Spleen (tissue), 13 donors: ENCODE measurements at regions of chr7 and their contacts with region 1.

Region 1: DNA sequence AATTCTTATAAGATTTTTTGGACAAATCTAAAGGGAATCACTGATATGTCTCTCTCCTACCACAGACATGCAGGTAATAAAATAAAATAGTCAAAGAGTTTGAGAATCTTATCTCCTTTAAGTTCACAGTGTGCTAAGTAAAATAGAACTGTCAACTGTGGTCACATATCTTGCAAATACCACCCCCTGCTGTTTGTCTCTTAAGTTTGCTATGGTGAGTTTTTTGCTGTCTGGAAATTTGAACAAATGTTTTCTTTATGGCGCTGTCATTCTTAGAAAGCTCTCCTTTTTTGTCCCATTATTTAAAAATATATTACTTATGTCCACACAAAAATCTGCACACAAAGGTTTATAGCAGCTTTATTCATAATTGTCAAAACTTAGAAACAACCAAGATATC is 19.6 kb downstream of the GIMAP5 start:
- DNase-seq: no peak
- H3K4me3 ChIP-seq: no peak overlapping the region
- H3K27ac ChIP-seq: peak overlapping the region in 4 of 8 donors; percentile 74 to 82 (median 78)
- H3K4me1 ChIP-seq: peaks cover 13 to 56% (median 32%) of the 10 kb centered on the region in 6 donors
- H3K27me3 ChIP-seq: no peaks in the 10 kb centered on the region
- CTCF ChIP-seq: peak; percentile 26 to 70 (median 59)
- POLR2A ChIP-seq: no peak

Region 2: DNA sequence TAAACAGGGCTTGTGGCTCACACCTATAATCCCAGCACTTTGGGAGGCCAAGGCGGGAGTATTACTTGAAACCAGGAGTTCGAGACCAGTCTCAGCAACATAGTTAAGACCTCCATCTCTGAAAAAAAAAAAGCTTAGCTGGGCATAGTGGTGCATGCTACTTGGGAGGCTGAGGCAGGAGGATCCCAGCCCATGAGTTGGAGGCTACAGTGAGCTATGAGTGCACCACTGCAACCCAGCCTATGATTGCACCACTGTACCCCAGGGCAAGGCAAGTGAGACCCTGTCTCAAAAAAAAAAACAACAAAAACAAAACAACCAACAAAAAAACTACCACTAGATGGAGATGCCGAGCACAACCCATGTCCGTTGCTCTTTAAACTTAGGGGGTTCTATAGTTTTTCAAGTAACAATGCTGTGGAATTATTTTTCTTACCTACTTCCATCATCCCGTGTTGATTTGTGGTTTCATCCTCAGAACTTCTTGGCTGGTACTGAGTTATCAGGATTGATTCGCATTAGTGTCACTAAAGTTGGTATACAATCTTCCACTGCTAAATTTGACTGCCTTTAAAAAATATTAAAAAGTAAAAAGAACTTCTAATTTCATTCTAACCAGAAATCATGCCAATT is 400.5 kb before region 1 on chr7:
- intact Hi-C with region 1: no loop called
- DNase-seq: no peak
- H3K4me3 ChIP-seq: no peak overlapping the region
- H3K27ac ChIP-seq: peak overlapping the region in 3 of 8 donors; percentile 43 to 51 (median 45)
- H3K4me1 ChIP-seq: peaks cover 0 to 39% (median 22%) of the 10 kb centered on the region in 6 donors
- H3K27me3 ChIP-seq: no peaks in the 10 kb centered on the region
- CTCF ChIP-seq: peak in 9 of 11 experiments; percentile 18 to 75 (median 59)
- POLR2A ChIP-seq: no peak

Region 3: DNA sequence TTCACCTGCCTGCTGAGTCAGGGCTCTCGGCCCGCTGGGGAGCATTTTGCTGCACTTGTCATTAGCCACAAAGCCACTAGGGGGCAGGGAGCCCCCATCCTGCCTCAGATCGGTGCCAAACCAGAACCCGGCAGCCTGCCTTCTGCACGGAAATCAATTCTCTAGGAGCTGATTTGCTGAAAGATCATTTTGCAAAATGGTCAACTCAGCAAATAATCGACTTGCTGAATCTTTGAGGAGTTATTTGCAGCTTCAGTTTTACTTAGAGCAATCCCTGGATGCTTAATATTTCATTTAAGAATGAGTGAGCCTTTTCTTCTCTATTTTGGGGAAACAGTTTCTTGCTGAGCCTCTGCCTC is 308.1 kb before region 1 on chr7:
- intact Hi-C with region 1: loop called (anchors 2 kb)
- DNase-seq: peak; percentile 95
- H3K4me3 ChIP-seq: peak overlapping the region in 2 of 8 donors; percentile 12 to 93
- H3K27ac ChIP-seq: peak overlapping the region; percentile 82 to 95 (median 91)
- H3K4me1 ChIP-seq: peaks cover 23 to 90% (median 66%) of the 10 kb centered on the region in 6 donors
- H3K27me3 ChIP-seq: no peaks in the 10 kb centered on the region
- CTCF ChIP-seq: peak; percentile 93 to 98 (median 96)
- POLR2A ChIP-seq: no peak